ENCODE measurements at regions of chr15 and their contacts with region 1.

Region 1: DNA sequence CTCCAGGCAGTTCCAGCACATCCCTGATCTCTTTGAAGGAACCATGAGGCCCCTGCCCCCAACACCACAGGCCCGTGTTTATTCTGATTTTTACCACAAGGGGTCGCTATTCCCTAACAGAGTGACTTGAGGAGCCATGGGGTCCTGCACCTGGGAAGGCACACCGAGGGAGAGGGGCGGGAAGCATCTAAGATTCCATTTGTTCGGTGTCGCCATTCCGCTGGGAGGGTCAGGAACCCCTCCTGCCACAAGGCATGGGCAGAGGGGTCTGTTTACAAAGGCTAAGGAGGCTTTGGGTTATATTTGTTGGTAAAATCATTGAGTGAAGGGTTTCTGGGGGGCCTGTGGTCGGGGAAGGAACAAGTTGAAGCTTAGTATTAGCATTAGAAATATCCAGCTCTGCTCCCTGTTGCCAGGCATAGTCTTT is 77.1 kb downstream of the WDR76 start:
- DNase-seq: peak in 7 of 10 donors; percentile 19 to 63 (median 44)
- H3K4me3 ChIP-seq: peak overlapping the region in 1 of 59 donors; percentile 10
- H3K27ac ChIP-seq: peak overlapping the region in 47 of 59 donors; percentile 7 to 84 (median 53)
- H3K27me3 ChIP-seq: no peaks in the 10 kb centered on the region
- CTCF ChIP-seq: peak; percentile 72 to 96 (median 87)

Region 2: GRCh38 chr15:44066316-44066740 is 162.5 kb after region 1 on chr15:
- intact Hi-C with region 1: loop called in 1 of 2 experiments (anchors 5 kb)
- DNase-seq: peak in 4 of 10 donors; percentile 19 to 58 (median 28)
- H3K4me3 ChIP-seq: peak overlapping the region in 7 of 59 donors; percentile 0 to 39 (median 7)
- H3K27ac ChIP-seq: peak overlapping the region in 38 of 59 donors; percentile 3 to 75 (median 50)
- H3K27me3 ChIP-seq: no peaks in the 10 kb centered on the region
- CTCF ChIP-seq: peak; percentile 46 to 85 (median 72)

Region 3: GRCh38 chr15:44130778-44131177 is 226.9 kb after region 1 on chr15:
- intact Hi-C with region 1: loop called (anchors 5 to 10 kb)
- DNase-seq: no peak
- H3K4me3 ChIP-seq: no peak overlapping the region
- H3K27ac ChIP-seq: peak overlapping the region in 24 of 59 donors; percentile 2 to 77 (median 47)
- H3K27me3 ChIP-seq: no peaks in the 10 kb centered on the region
- CTCF ChIP-seq: peak in 52 of 56 donors; percentile 14 to 77 (median 50)

Region 4: DNA sequence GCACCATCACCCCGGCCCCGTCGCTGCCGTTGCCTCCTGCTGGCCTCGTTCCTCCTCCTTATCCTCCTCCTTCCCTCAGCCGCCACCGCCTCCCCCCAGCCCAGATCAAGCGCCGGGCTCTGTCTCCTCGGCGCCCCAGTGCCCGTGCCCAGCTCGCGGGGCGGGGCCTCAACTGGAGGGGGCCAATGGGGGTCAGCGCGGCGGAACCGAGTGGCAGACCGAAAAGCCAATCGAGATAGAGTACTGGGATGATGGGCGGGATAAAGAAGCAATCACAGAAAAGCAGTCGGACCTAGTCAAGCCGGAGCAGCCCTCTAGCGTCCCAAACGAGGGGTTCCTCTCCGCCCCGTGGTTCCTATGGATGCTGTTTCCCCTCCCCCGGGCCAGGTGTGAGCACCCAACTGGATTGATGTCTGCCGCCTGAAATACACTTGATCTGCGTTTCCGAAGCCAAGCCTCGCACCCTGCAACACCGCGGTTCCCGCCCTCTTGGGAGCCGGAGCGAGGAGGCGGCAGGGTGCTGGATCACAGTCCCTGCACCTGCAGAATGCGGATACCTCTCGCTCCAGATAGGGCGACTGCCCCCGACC is 291.4 kb after region 1 on chr15 and contains the start of gene FRMD5:
- intact Hi-C with region 1: loop called in 1 of 2 experiments (anchors 10 kb)
- DNase-seq: peak; percentile 92 to 97 (median 96)
- H3K4me3 ChIP-seq: peak within 1 kb of the TSS; percentile 60 to 98 (median 86)
- H3K27ac ChIP-seq: peak within 1 kb of the TSS; percentile 36 to 100 (median 92)
- H3K27me3 ChIP-seq: no peaks in the 10 kb centered on the region
- CTCF ChIP-seq: peak; percentile 23 to 80 (median 61)
- total RNA-seq, gene FRMD5: 19.7 to 90.4 (median 41.9) TPM

Region 5: DNA sequence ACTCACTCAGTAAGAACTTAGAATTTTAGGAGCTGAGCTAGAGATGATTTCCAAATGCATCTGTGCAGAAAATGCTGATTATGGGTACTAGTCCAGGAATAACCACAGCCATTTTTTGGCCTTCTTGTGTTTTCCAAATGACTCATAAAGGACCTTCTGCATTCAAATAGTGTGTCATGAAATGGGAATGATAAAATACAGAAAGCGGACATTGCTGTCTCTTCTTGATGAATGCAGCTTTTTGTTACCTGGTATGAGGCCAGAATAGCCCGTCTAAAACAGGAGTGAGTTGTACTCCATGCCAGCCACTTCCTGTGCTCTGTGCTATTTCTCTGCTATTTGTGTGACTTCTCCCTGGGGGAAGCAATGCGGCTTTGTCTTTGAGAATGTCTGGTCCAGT is 311.7 kb after region 1 on chr15:
- intact Hi-C with region 1: loop called in 1 of 2 experiments (anchors 5 kb)
- DNase-seq: no peak
- H3K4me3 ChIP-seq: no peak overlapping the region
- H3K27ac ChIP-seq: peak overlapping the region in 27 of 59 donors; percentile 1 to 72 (median 21)
- H3K27me3 ChIP-seq: no peaks in the 10 kb centered on the region
- CTCF ChIP-seq: no peak

Measured in dorsolateral prefrontal cortex (tissue), 120 donors.